Endothelial cell of umbilical vein (primary cell): ENCODE measurements at regions of chr21 and their contacts with region 1.

Region 1: DNA sequence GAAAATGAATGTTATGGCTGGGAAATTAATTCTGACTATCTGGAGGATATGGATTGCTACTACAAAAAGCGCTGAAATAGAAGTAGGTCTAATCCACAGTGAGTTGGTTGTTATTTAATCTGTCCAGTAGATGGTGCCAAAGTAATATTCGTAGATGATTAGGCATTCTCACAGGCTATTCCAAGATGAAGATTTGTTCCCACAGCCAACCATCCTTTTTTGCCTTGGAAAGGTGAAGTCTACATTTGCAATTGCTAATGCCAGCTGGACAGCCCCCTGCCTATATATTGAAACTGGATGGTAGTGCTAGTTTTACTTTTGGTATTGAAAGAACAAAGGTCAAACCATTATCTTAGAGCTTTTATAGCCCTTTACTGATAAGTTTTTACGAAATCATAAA is 43.8 kb downstream of the RBM11 start:
- DNase-seq: peak; percentile 56
- H3K4me3 ChIP-seq: no peak overlapping the region
- H3K27ac ChIP-seq: no peak overlapping the region
- H3K4me1 ChIP-seq: no peaks in the 10 kb centered on the region
- H3K27me3 ChIP-seq: no peaks in the 10 kb centered on the region
- CTCF ChIP-seq: peak; percentile 22 to 35
- POLR2A ChIP-seq: no peak

Region 2: GRCh38 chr21:14070020-14070893 is 189.5 kb before region 1 on chr21:
- CTCF ChIA-PET with region 1: no interaction called
- POLR2A ChIA-PET with region 1: no interaction called
- dilution Hi-C with region 1: no loop called
- intact Hi-C with region 1: no loop called
- DNase-seq: no peak
- H3K4me3 ChIP-seq: no peak overlapping the region
- H3K27ac ChIP-seq: no peak overlapping the region
- H3K4me1 ChIP-seq: no peaks in the 10 kb centered on the region
- H3K27me3 ChIP-seq: no peaks in the 10 kb centered on the region
- CTCF ChIP-seq: no peak
- POLR2A ChIP-seq: no peak

Region 3: GRCh38 chr21:14306151-14306907 is 46.6 kb after region 1 on chr21:
- CTCF ChIA-PET with region 1: no interaction called
- POLR2A ChIA-PET with region 1: no interaction called
- dilution Hi-C with region 1: no loop called
- intact Hi-C with region 1: loop called (anchors 5 kb)
- DNase-seq: peak; percentile 43
- H3K4me3 ChIP-seq: no peak overlapping the region
- H3K27ac ChIP-seq: peak overlapping the region; percentile 10
- H3K4me1 ChIP-seq: peaks cover 8% of the 10 kb centered on the region
- H3K27me3 ChIP-seq: no peaks in the 10 kb centered on the region
- CTCF ChIP-seq: no peak
- POLR2A ChIP-seq: no peak

Region 4: GRCh38 chr21:14382835-14383594 is 123.3 kb after region 1 on chr21 and contains the start of gene HSPA13:
- CTCF ChIA-PET with region 1: no interaction called
- POLR2A ChIA-PET with region 1: no interaction called
- dilution Hi-C with region 1: no loop called
- intact Hi-C with region 1: loop called (anchors 5 kb)
- DNase-seq: peak; percentile 100
- H3K4me3 ChIP-seq: peak within 1 kb of the TSS; percentile 85 to 91 (median 85)
- H3K27ac ChIP-seq: peak within 1 kb of the TSS; percentile 93
- H3K4me1 ChIP-seq: peaks cover 26% of the 10 kb centered on the region
- H3K27me3 ChIP-seq: no peaks in the 10 kb centered on the region
- CTCF ChIP-seq: peak in 1 of 2 donors; percentile 14
- POLR2A ChIP-seq: peak; percentile 76
- total RNA-seq, gene HSPA13: 40.4 and 44.8 TPM in 2 replicates

Region 5: GRCh38 chr21:14403681-14404318 is 144.1 kb after region 1 on chr21:
- CTCF ChIA-PET with region 1: no interaction called
- POLR2A ChIA-PET with region 1: no interaction called
- dilution Hi-C with region 1: no loop called
- intact Hi-C with region 1: loop called (anchors 2 kb)
- DNase-seq: peak; percentile 45
- H3K4me3 ChIP-seq: no peak overlapping the region
- H3K27ac ChIP-seq: no peak overlapping the region
- H3K4me1 ChIP-seq: no peaks in the 10 kb centered on the region
- H3K27me3 ChIP-seq: no peaks in the 10 kb centered on the region
- CTCF ChIP-seq: peak; percentile 33 to 49
- POLR2A ChIP-seq: no peak

Region 6: DNA sequence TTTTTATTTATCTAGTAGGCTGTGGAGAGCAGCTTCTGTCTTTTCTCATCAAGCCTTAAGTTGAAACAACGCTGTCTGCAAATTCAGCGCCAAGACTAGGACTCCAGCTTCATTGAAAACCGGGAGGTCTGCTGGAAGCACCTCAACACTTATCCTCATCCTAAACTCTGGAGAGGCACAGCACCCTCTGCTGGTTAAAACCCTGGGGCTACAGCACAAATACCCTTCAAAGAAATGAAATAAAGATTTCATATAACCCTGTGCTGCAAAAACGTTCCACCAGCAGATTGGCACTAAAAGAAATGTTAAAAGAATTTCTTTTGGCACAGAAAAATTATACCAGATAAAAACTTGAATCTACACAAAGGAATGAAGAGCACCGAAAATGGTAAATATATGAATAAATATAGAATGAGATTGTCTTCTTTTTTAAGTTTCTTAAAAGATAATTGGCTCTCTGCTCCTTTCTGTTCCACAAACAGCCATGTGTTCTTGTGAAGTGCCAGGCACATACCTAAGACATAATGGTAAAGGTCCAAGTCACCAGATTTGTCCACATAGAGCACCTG is 514.1 kb after region 1 on chr21:
- CTCF ChIA-PET with region 1: interaction called, 7 read pairs
- POLR2A ChIA-PET with region 1: no interaction called
- dilution Hi-C with region 1: no loop called
- intact Hi-C with region 1: loop called (anchors 1 kb)
- DNase-seq: peak; percentile 53
- H3K4me3 ChIP-seq: no peak overlapping the region
- H3K27ac ChIP-seq: no peak overlapping the region
- H3K4me1 ChIP-seq: no peaks in the 10 kb centered on the region
- H3K27me3 ChIP-seq: no peaks in the 10 kb centered on the region
- CTCF ChIP-seq: peak; percentile 61 to 65
- POLR2A ChIP-seq: no peak

Region 7: DNA sequence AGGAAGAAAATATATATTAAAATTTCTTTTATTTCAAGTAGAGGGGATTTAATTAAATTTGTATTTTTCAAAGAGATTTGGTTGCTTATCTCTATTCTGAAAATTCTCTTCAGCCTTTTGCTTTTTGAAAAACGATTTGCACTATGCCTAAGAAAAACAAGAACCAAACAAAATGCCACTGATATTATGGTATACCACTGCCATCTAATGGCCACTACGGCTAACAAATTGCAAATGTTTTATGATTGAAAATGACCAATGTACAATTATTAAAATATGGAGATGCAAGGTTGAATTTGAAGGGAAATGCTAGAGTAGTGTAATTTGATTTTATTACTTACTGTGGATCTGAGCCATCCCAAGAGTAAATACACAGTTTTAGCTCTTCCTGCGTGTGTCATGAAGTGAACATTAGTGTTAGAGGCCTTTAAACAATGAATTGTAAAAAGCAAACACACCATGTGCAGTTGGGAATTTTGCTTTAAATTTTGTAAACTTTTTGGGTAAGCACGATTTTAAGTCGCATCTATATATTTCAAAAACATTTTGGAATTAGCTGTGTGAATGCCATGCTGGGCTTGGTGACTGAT is 1332.6 kb after region 1 on chr21:
- CTCF ChIA-PET with region 1: no interaction called
- POLR2A ChIA-PET with region 1: no interaction called
- dilution Hi-C with region 1: no loop called
- intact Hi-C with region 1: loop called (anchors 10 kb)
- DNase-seq: peak; percentile 65
- H3K4me3 ChIP-seq: no peak overlapping the region
- H3K27ac ChIP-seq: no peak overlapping the region
- H3K4me1 ChIP-seq: no peaks in the 10 kb centered on the region
- H3K27me3 ChIP-seq: peaks cover 0 to 3% of the 10 kb centered on the region in 2 experiments
- CTCF ChIP-seq: peak; percentile 28 to 39
- POLR2A ChIP-seq: no peak